Mammary epithelial cell (primary cell): ENCODE measurements at regions of chr7 and their contacts with region 1.

Region 1: DNA sequence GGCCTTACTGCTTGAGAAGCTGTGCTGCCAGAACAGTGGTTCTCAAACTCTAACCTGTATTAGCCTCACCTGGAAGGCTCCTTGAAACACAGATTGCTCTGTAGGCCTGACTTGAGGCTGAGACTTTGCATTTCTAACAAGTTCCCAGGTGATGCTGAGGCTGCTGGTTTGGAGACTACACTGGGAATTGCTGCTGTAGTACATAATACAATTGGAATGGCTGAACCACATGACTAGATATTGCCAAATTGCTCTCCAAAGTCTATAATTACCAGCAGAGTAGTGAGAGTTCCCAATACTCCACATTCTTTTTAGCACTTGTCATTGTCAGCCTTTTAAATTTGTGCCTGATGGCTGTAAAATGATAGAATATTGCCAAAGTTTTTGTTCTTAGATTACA is 39.9 kb downstream of the PLEKHA8 start:
- DNase-seq: peak; percentile 50
- H3K4me3 ChIP-seq: no peak overlapping the region
- H3K27ac ChIP-seq: no peak overlapping the region
- H3K4me1 ChIP-seq: peaks cover 7% of the 10 kb centered on the region
- H3K27me3 ChIP-seq: no peaks in the 10 kb centered on the region
- CTCF ChIP-seq: no peak

Region 2: DNA sequence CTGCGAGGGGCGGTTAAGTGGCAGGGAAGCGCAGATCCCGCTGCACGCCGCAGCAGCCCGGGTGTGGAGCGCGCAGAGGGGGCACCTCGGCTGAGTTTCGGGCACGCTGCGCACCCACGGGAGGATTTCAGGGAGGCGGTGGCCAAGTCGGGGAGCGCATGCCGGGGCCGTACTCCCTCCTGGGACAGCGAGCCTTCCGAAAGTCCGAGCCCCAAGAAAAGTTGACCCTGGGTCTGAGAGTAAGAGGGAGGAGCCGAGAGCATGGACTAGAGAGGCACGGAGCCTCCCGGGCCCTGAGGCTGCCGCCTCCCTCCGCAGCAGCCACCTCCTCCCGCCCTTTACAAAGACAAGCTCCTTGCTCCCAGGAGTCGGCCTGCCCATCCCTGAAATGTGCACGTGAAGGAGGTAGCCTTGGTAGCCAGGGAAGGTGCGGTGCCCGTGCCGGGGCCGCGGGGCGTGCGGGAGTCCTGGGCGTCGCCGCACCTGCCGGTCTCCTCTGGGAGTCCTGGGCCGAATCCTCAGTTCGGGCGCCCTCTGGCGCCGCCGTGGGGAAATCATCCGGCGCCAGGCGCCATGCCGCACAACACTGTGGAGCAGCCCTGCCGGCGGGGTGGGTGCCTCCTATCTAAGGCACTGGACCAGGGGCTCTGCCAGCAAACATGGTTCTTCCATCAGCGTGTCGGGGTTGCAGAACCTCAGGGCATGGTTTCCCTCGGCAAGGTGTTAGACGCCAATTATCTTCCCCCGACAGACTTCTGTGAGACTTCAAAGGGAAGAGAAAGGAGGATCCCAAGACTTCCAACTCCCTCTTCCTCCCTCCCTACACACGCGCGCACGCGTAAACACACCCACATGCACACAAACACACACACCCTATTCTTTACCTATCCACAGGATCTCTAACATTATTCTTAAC is 1214.0 kb before region 1 on chr7:
- CTCF ChIA-PET with region 1: no interaction called
- dilution Hi-C with region 1: no loop called
- in situ Hi-C with region 1: no loop called
- intact Hi-C with region 1: no loop called
- DNase-seq: peak; percentile 69
- H3K4me3 ChIP-seq: peak overlapping the region; percentile 41 to 65 (median 58)
- H3K27ac ChIP-seq: no peak overlapping the region
- H3K4me1 ChIP-seq: peaks cover 35% of the 10 kb centered on the region
- H3K27me3 ChIP-seq: no peaks in the 10 kb centered on the region
- CTCF ChIP-seq: peak; percentile 61 to 93

Region 3: DNA sequence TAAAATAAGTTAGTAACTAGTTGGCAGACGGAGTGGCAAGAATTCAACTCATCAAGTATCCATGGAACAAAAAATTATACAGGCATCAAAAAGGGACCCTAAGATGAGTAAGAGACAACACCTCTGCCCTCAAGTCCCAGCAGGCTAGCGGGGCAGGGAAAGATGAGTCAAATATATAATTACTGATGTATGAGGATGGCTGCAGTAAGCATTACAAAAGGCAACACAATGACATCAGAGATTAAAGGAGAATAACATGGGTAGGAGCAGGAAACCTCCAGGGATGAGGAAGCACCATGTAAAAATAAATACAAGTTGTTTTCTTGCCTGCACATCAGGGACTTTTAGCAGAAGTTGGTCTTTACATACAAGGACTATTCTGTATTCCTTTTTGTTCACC is 127.9 kb before region 1 on chr7:
- CTCF ChIA-PET with region 1: no interaction called
- dilution Hi-C with region 1: no loop called
- in situ Hi-C with region 1: no loop called
- intact Hi-C with region 1: loop called (anchors 5 kb)
- DNase-seq: peak; percentile 25
- H3K4me3 ChIP-seq: no peak overlapping the region
- H3K27ac ChIP-seq: no peak overlapping the region
- H3K4me1 ChIP-seq: peaks cover 12% of the 10 kb centered on the region
- H3K27me3 ChIP-seq: no peaks in the 10 kb centered on the region
- CTCF ChIP-seq: no peak